Transverse colon (tissue), 4 donors: ENCODE measurements at regions of chr18 and their contacts with region 1.

Region 1: DNA sequence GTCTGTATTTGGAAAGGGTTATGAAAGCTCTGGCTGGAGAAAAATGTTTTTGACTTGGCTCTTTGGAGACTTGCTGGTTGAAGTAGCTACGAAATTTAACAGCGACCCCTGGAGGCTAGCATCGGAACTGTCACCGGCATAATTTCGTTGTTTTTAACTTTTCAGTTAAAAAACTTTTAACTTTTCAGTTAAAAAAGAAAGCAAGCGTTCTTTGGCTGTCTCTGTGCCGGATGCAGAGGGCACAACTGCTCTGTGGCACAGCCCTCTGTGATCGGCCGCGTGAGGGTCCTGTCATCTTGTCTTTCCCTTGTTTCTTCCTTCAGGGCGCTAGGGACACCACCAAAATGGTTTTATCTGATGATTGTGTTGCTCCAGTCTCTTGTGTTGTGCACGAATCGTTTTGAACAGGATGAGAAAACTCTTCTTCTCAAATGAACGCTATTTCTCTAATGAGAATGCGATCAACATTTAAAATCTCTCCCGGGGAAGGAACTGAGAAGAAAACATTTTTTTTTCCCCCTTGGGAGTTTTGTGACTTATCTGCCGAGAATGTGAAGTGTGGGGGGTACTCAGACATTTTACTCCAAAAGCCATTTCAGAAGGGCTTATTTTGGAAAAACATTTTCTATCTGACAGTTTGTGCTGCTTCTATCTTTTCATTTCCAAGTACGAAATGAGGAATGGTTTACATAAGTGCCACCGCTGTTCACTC is 57.1 kb downstream of the ADCYAP1 start:
- DNase-seq: peak; percentile 29
- H3K4me3 ChIP-seq: peak overlapping the region in 2 of 4 donors; percentile 8 to 37
- H3K27ac ChIP-seq: no peak overlapping the region
- H3K4me1 ChIP-seq: peaks cover 0 to 4% (median 0%) of the 10 kb centered on the region in 4 donors
- H3K27me3 ChIP-seq: peaks cover 13% of the 10 kb centered on the region
- CTCF ChIP-seq: peak; percentile 69 to 89 (median 88)
- EP300 ChIP-seq: no peak
- POLR2A ChIP-seq: no peak

Region 2: GRCh38 chr18:666177-666576 is 295.6 kb before region 1 on chr18:
- in situ Hi-C with region 1: no loop called
- intact Hi-C with region 1: no loop called
- DNase-seq: no peak
- H3K4me3 ChIP-seq: no peak overlapping the region
- H3K27ac ChIP-seq: no peak overlapping the region
- H3K4me1 ChIP-seq: no peaks in the 10 kb centered on the region
- H3K27me3 ChIP-seq: no peaks in the 10 kb centered on the region
- CTCF ChIP-seq: peak in 2 of 5 experiments; percentile 6 to 9
- EP300 ChIP-seq: no peak
- POLR2A ChIP-seq: no peak

Region 3: DNA sequence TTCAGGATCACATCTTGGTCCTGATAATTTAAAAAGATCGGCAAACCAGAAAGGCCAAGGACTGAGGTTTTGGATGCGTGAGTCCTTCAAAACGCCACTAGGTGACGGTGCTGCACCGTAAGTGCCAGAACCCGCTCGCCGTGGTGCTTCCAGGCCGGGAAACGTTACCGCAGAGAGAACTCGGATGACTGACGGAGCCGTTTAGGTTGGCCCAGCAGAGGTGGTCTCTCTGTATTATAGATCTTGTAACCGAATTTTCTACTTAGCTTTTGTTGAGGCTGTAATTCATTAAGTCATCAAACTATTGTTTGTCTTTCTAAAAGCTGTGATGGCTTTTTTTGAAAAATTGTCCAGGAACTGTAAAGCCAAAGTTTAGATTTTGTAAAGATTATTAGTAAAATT is 96.9 kb before region 1 on chr18:
- in situ Hi-C with region 1: loop called in 3 of 4 experiments (anchors 5 to 10 kb)
- intact Hi-C with region 1: no loop called
- DNase-seq: peak; percentile 60
- H3K4me3 ChIP-seq: no peak overlapping the region
- H3K27ac ChIP-seq: no peak overlapping the region
- H3K4me1 ChIP-seq: no peaks in the 10 kb centered on the region
- H3K27me3 ChIP-seq: peaks cover 39% of the 10 kb centered on the region
- CTCF ChIP-seq: peak; percentile 87 to 93 (median 90)
- EP300 ChIP-seq: no peak
- POLR2A ChIP-seq: no peak

Region 4: DNA sequence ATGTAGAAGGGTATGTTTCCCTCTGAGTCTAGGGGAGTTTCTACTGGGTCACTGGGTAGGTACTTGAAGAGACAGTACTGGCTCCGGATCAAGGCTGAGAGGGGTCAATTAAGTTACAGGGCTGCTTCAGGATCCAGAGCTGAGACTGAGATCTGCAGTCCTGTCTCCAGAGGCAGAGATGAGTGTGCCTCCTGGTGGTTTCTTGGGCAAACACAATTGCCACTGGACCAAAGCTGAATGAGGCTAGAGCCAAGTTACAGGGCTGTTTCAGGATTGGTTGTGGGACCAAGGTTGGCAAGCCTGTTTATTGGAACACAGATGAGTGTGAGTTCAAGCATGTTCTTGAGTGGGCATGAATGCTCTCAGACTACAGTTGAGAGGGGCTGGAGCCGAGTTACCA is 100.8 kb after region 1 on chr18:
- in situ Hi-C with region 1: no loop called
- intact Hi-C with region 1: no loop called
- DNase-seq: no peak
- H3K4me3 ChIP-seq: no peak overlapping the region
- H3K27ac ChIP-seq: no peak overlapping the region
- H3K4me1 ChIP-seq: no peaks in the 10 kb centered on the region
- H3K27me3 ChIP-seq: no peaks in the 10 kb centered on the region
- CTCF ChIP-seq: no peak
- EP300 ChIP-seq: no peak
- POLR2A ChIP-seq: no peak

Region 5: DNA sequence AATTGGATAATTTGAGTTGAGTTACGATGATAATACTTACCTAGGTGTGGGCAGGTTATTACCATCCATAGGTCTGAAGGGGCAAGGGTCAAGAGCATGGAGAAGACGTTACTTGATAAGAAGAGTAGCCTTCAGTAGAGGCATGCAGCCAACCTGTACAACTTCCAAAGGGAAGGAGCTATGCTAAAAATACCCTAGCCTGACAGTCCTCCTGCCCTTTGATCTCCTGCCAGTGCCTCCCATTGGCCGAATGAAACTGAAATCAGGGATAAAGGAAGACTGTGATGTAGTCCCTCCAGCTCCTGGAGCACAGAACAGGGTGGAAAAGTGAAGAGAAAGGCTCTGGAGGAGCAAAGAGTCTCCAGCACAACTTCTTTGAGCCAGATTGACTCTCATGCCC is 430.2 kb after region 1 on chr18:
- in situ Hi-C with region 1: no loop called
- intact Hi-C with region 1: no loop called
- DNase-seq: no peak
- H3K4me3 ChIP-seq: no peak overlapping the region
- H3K27ac ChIP-seq: no peak overlapping the region
- H3K4me1 ChIP-seq: no peaks in the 10 kb centered on the region
- H3K27me3 ChIP-seq: no peaks in the 10 kb centered on the region
- CTCF ChIP-seq: no peak
- EP300 ChIP-seq: no peak
- POLR2A ChIP-seq: no peak